T-cell (primary cell): ENCODE measurements at regions of chr10 and their contacts with region 1.

Region 1: GRCh38 chr10:132133449-132134240 is 53.1 kb upstream of the DPYSL4 start:
- DNase-seq: no peak
- ATAC-seq: no peak
- H3K4me3 ChIP-seq: no peak overlapping the region
- H3K4me3 Mint-ChIP-seq: no peak overlapping the region
- H3K27ac ChIP-seq: no peak overlapping the region
- H3K27ac Mint-ChIP-seq: no peak overlapping the region
- H3K4me1 ChIP-seq: no peaks in the 10 kb centered on the region
- H3K4me1 Mint-ChIP-seq: peaks cover 0 to 2% (median 0%) of the 10 kb centered on the region in 3 donors
- H3K27me3 ChIP-seq: peaks cover 0 to 60% of the 10 kb centered on the region in 2 experiments
- H3K27me3 Mint-ChIP-seq: peaks cover 9 to 37% of the 10 kb centered on the region in 2 donors

Region 2: GRCh38 chr10:132163278-132163765 is 29.7 kb after region 1 on chr10:
- CTCF ChIA-PET with region 1: no interaction called
- POLR2A ChIA-PET with region 1: no interaction called
- DNase-seq: peak in 20 of 35 experiments; percentile 10 to 55 (median 35)
- ATAC-seq: peak in 3 of 4 experiments; percentile 9 to 33 (median 29)
- H3K4me3 ChIP-seq: no peak overlapping the region
- H3K4me3 Mint-ChIP-seq: no peak overlapping the region
- H3K27ac ChIP-seq: no peak overlapping the region
- H3K27ac Mint-ChIP-seq: no peak overlapping the region
- H3K4me1 ChIP-seq: peaks cover 7 to 42% of the 10 kb centered on the region in 2 experiments
- H3K4me1 Mint-ChIP-seq: peaks cover 27 to 28% (median 28%) of the 10 kb centered on the region in 3 donors
- H3K27me3 ChIP-seq: peaks cover 0 to 10% of the 10 kb centered on the region in 2 experiments
- H3K27me3 Mint-ChIP-seq: no peaks in the 10 kb centered on the region

Region 3: GRCh38 chr10:132381682-132382081 is 248.0 kb after region 1 on chr10:
- CTCF ChIA-PET with region 1: interaction called in 1 of 2 experiments, 12 read pairs
- POLR2A ChIA-PET with region 1: no interaction called
- DNase-seq: no peak
- ATAC-seq: no peak
- H3K4me3 ChIP-seq: no peak overlapping the region
- H3K4me3 Mint-ChIP-seq: no peak overlapping the region
- H3K27ac ChIP-seq: peak overlapping the region; percentile 12
- H3K27ac Mint-ChIP-seq: peak overlapping the region; percentile 36 to 60
- H3K4me1 ChIP-seq: peaks cover 0 to 2% of the 10 kb centered on the region in 2 experiments
- H3K4me1 Mint-ChIP-seq: peaks cover 0 to 16% (median 9%) of the 10 kb centered on the region in 3 donors
- H3K27me3 ChIP-seq: no peaks in the 10 kb centered on the region
- H3K27me3 Mint-ChIP-seq: no peaks in the 10 kb centered on the region

Region 4: DNA sequence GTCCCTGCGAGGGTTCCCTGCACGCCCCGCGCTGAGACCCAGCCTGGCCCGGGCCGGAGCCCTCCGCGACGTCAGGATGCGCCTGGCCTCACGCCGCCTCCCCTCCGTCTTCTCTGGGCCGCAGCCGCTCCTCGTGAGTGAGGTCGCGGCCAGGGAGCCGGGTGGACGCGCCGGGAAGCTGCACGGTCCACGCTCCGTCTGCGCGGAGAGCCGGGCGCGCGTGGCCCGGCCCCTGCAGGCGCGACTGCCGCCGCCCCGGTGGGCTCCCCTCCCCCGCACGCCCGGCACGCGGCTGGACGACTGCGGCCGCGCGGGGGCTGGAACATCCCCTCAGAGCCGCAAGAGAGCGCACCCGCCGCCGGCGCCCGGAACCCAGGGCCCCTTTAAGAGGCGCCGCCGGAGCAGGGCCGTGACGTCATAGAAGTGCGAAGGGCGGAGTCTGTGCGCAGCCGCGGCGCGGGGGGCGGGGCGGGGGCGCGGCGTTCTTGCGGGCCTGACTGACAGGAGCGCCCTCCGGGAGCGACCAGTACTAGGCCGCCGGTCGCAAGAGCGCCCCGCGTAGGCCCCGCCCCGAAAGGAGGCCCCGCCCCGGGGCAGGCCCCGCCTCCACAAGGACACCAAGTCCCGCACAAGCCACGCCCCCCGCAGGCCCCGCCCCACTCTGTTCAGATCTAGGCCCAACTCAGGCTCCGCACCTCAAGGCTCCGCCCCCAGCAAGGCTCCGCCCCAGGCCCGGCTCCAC is 403.5 kb after region 1 on chr10:
- CTCF ChIA-PET with region 1: no interaction called
- POLR2A ChIA-PET with region 1: no interaction called
- DNase-seq: peak; percentile 100
- ATAC-seq: peak; percentile 84 to 92 (median 87)
- H3K4me3 ChIP-seq: peak overlapping the region; percentile 41 to 45
- H3K4me3 Mint-ChIP-seq: peak overlapping the region; percentile 66 to 96 (median 74)
- H3K27ac ChIP-seq: no peak overlapping the region
- H3K27ac Mint-ChIP-seq: peak overlapping the region; percentile 43 to 61
- H3K4me1 ChIP-seq: peaks cover 41 to 49% of the 10 kb centered on the region in 2 experiments
- H3K4me1 Mint-ChIP-seq: peaks cover 40 to 54% (median 45%) of the 10 kb centered on the region in 3 donors
- H3K27me3 ChIP-seq: peaks cover 0 to 13% of the 10 kb centered on the region in 2 experiments
- H3K27me3 Mint-ChIP-seq: no peaks in the 10 kb centered on the region